Naive thymus-derived CD4-positive, alpha-beta T cell (primary cell): ENCODE measurements at regions of chr5 and their contacts with region 1.

Region 1: GRCh38 chr5:38441453-38442246 is 114.8 kb downstream of the LIFR start:
- DNase-seq: peak; percentile 50 to 79 (median 72)
- ATAC-seq: peak; percentile 98
- H3K4me3 ChIP-seq: no peak overlapping the region
- H3K4me3 Mint-ChIP-seq: no peak overlapping the region
- H3K27ac ChIP-seq: no peak overlapping the region
- H3K27ac Mint-ChIP-seq: no peak overlapping the region
- H3K4me1 ChIP-seq: no peaks in the 10 kb centered on the region
- H3K4me1 Mint-ChIP-seq: no peaks in the 10 kb centered on the region
- H3K27me3 ChIP-seq: no peaks in the 10 kb centered on the region
- H3K27me3 Mint-ChIP-seq: peaks cover 37 to 43% (median 41%) of the 10 kb centered on the region in 5 donors

Region 2: DNA sequence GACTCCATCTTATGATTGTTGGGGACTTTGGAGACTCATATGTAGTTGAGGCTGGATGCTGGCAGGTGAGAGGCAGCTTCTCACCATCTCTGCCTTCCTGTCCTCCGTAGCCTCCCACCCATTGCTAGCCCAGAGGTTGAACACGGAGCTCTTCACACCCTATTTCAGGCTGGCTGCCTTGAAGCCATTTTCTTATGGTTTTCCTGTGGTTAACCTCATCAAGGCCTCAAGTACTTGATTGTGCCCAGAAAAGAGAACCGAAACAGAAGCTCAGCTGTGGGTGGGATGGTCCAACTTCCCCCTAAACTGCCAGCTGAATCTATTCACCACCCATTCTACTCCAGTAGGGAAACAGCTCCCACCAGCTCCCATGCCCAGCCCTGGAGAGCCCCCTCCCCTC is 11.9 kb after region 1 on chr5:
- CTCF ChIA-PET with region 1: interaction called, 24 read pairs
- POLR2A ChIA-PET with region 1: no interaction called
- intact Hi-C with region 1: no loop called
- DNase-seq: peak in 8 of 9 donors; percentile 50 to 82 (median 73)
- ATAC-seq: peak; percentile 86
- H3K4me3 ChIP-seq: no peak overlapping the region
- H3K4me3 Mint-ChIP-seq: peak overlapping the region; percentile 36 to 77 (median 66)
- H3K27ac ChIP-seq: no peak overlapping the region
- H3K27ac Mint-ChIP-seq: peak overlapping the region in 8 of 9 donors; percentile 6 to 82 (median 43)
- H3K4me1 ChIP-seq: peaks cover 21 to 32% of the 10 kb centered on the region in 2 donors
- H3K4me1 Mint-ChIP-seq: peaks cover 19 to 38% (median 30%) of the 10 kb centered on the region in 7 donors
- H3K27me3 ChIP-seq: peaks cover 0 to 3% of the 10 kb centered on the region in 2 donors
- H3K27me3 Mint-ChIP-seq: peaks cover 68 to 89% (median 82%) of the 10 kb centered on the region in 5 donors

Region 3: GRCh38 chr5:38666668-38667498 is 225.2 kb after region 1 on chr5:
- CTCF ChIA-PET with region 1: no interaction called
- POLR2A ChIA-PET with region 1: no interaction called
- intact Hi-C with region 1: loop called in 1 of 2 experiments (anchors 1 kb)
- DNase-seq: no peak
- ATAC-seq: no peak
- H3K4me3 ChIP-seq: no peak overlapping the region
- H3K4me3 Mint-ChIP-seq: no peak overlapping the region
- H3K27ac ChIP-seq: no peak overlapping the region
- H3K27ac Mint-ChIP-seq: no peak overlapping the region
- H3K4me1 ChIP-seq: no peaks in the 10 kb centered on the region
- H3K4me1 Mint-ChIP-seq: no peaks in the 10 kb centered on the region
- H3K27me3 ChIP-seq: no peaks in the 10 kb centered on the region
- H3K27me3 Mint-ChIP-seq: peaks cover 12 to 40% (median 27%) of the 10 kb centered on the region in 5 donors

Region 4: DNA sequence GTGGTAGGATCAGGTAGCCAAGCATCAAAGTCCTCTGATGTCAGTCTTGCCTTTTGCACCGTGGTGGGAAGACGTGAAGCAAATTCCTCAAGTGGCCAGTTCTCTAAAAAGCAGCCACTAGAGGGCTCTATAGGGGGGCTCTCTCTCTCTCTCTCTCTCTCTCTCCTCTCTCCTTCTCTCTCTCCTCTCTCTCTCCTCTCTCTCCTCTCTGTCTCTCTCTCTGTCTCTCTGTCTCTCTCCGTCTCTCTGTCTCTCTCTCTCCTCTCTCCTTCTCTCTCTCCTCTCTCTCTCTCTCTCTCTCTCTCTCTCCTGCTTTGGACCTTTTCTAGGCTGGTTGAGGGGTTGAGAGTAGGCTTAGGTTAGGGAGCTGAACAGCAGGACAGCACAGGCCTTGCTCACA is 390.3 kb after region 1 on chr5:
- CTCF ChIA-PET with region 1: no interaction called
- POLR2A ChIA-PET with region 1: no interaction called
- intact Hi-C with region 1: loop called in 1 of 2 experiments (anchors 5 kb)
- DNase-seq: no peak
- ATAC-seq: no peak
- H3K4me3 ChIP-seq: no peak overlapping the region
- H3K4me3 Mint-ChIP-seq: no peak overlapping the region
- H3K27ac ChIP-seq: no peak overlapping the region
- H3K27ac Mint-ChIP-seq: peak overlapping the region in 1 of 9 donors; percentile 59
- H3K4me1 ChIP-seq: no peaks in the 10 kb centered on the region
- H3K4me1 Mint-ChIP-seq: peaks cover 0 to 21% (median 0%) of the 10 kb centered on the region in 7 donors
- H3K27me3 ChIP-seq: no peaks in the 10 kb centered on the region
- H3K27me3 Mint-ChIP-seq: peaks cover 15 to 45% (median 30%) of the 10 kb centered on the region in 5 donors

Region 5: DNA sequence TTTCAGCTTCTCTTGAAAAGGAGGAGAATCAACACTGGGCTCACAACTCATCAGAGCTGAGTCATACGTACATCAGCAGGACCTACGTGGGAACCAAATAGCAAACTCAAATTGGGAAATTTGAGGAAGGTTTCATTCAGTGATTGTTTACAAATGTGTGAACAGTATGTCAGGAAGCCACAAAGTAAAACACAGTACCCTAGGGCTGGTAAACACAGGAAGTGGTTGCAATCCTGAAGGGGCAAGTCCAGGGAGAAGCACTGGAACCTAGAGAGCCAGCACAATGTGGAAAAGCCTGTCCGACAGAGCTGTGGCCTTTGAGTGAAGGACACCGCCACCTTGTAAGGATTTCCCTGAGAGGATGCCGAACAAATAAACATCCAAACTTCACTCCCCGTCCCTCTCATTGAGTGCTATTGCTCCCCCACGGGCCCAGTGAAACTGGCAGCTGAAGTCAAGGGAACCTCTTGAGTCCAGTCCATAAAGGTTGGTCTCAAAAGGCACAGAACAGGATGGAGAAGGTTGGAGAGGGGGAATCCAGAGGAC is 659.3 kb after region 1 on chr5:
- CTCF ChIA-PET with region 1: no interaction called
- POLR2A ChIA-PET with region 1: no interaction called
- intact Hi-C with region 1: loop called in 1 of 2 experiments (anchors 10 kb)
- DNase-seq: peak in 1 of 9 donors; percentile 22
- ATAC-seq: peak; percentile 17
- H3K4me3 ChIP-seq: no peak overlapping the region
- H3K4me3 Mint-ChIP-seq: peak overlapping the region in 2 of 10 donors; percentile 39 to 54
- H3K27ac ChIP-seq: peak overlapping the region; percentile 2
- H3K27ac Mint-ChIP-seq: peak overlapping the region; percentile 38 to 91 (median 84)
- H3K4me1 ChIP-seq: peaks cover 14 to 20% of the 10 kb centered on the region in 2 donors
- H3K4me1 Mint-ChIP-seq: peaks cover 14 to 60% (median 40%) of the 10 kb centered on the region in 7 donors
- H3K27me3 ChIP-seq: no peaks in the 10 kb centered on the region
- H3K27me3 Mint-ChIP-seq: no peaks in the 10 kb centered on the region

Region 6: DNA sequence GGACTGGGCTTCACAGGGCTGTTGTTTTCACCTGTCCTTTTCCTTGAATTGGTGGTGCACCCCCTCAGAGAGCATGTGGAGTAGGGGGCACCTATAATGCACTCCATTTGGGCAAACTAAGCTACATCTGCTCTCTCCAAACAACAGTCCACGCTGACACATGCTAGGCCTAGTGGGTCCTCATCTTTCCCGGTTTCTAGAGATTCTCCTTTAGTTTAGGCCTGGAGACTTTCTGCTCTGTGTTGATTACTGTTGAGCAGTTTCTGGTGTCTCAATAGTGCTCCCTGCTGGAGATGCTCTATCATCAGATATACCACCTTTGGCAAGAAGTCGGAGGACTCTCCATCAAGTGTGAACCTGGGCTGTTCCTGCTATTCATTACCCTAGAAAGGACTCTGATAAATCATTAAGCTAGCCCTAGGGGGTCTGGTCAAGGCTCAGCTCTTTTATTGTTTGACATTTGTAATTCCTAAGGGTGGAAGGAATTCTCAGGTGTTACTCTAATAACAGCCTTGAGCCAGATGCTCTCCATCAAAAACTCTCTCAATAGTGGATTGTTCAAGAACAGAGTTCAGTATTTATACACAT is 841.7 kb after region 1 on chr5:
- CTCF ChIA-PET with region 1: interaction called, 3 read pairs
- POLR2A ChIA-PET with region 1: no interaction called
- intact Hi-C with region 1: loop called in 1 of 2 experiments (anchors 1 kb)
- DNase-seq: peak; percentile 14 to 83 (median 73)
- ATAC-seq: peak; percentile 99
- H3K4me3 ChIP-seq: no peak overlapping the region
- H3K4me3 Mint-ChIP-seq: peak overlapping the region in 8 of 10 donors; percentile 8 to 66 (median 57)
- H3K27ac ChIP-seq: peak overlapping the region; percentile 3
- H3K27ac Mint-ChIP-seq: peak overlapping the region in 8 of 9 donors; percentile 66 to 98 (median 86)
- H3K4me1 ChIP-seq: peaks cover 4 to 7% of the 10 kb centered on the region in 2 donors
- H3K4me1 Mint-ChIP-seq: peaks cover 18 to 52% (median 46%) of the 10 kb centered on the region in 7 donors
- H3K27me3 ChIP-seq: no peaks in the 10 kb centered on the region
- H3K27me3 Mint-ChIP-seq: peaks cover 0 to 23% (median 8%) of the 10 kb centered on the region in 5 donors

Region 7: DNA sequence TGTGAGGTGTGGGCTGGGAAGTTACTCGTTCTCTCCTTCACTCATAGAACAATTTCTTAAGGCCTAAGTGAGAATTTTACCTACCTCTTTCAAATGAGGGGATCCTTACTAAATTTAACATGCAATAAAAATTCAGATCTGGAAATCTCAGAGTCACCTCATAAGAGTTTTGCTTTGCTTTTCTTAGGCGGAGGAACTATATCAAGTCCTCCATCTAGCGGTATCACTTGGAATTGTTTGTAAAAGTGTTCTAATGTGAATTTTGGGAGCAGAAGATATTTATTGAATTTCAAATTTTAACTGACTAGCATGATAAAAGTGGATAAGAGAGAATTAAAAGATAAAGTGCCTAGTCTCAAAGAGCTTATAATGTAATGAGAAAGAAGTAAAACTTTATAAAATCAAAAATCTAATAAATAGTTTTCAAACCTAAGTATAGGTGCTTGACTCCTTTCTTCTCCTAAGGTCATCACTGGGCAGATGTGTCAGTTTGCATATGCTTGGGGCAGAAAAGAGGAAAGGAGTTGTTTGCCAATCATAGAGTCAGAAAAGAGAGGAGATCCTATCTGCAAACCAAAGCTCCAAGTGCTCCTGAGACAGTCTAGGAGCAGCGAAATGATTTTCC is 1128.9 kb after region 1 on chr5:
- CTCF ChIA-PET with region 1: interaction called, 14 read pairs
- POLR2A ChIA-PET with region 1: no interaction called
- intact Hi-C with region 1: loop called in 1 of 2 experiments (anchors 1 kb)
- DNase-seq: peak in 5 of 9 donors; percentile 8 to 31 (median 27)
- ATAC-seq: peak; percentile 36
- H3K4me3 ChIP-seq: no peak overlapping the region
- H3K4me3 Mint-ChIP-seq: no peak overlapping the region
- H3K27ac ChIP-seq: no peak overlapping the region
- H3K27ac Mint-ChIP-seq: no peak overlapping the region
- H3K4me1 ChIP-seq: no peaks in the 10 kb centered on the region
- H3K4me1 Mint-ChIP-seq: peaks cover 0 to 3% (median 0%) of the 10 kb centered on the region in 7 donors
- H3K27me3 ChIP-seq: no peaks in the 10 kb centered on the region
- H3K27me3 Mint-ChIP-seq: peaks cover 0 to 29% (median 10%) of the 10 kb centered on the region in 5 donors